Endothelial cell of umbilical vein (primary cell): ENCODE measurements at regions of chr18 and their contacts with region 1.

Region 1: GRCh38 chr18:5057386-5058348 is 139.4 kb downstream of the AKAIN1 start:
- DNase-seq: peak; percentile 50
- H3K4me3 ChIP-seq: no peak overlapping the region
- H3K27ac ChIP-seq: no peak overlapping the region
- H3K4me1 ChIP-seq: no peaks in the 10 kb centered on the region
- H3K27me3 ChIP-seq: peaks cover 0 to 1% of the 10 kb centered on the region in 2 experiments
- CTCF ChIP-seq: peak; percentile 61 to 72
- POLR2A ChIP-seq: no peak

Region 2: GRCh38 chr18:4119813-4120212 is 937.9 kb before region 1 on chr18:
- CTCF ChIA-PET with region 1: no interaction called
- POLR2A ChIA-PET with region 1: no interaction called
- dilution Hi-C with region 1: no loop called
- intact Hi-C with region 1: loop called (anchors 5 kb)
- DNase-seq: no peak
- H3K4me3 ChIP-seq: no peak overlapping the region
- H3K27ac ChIP-seq: no peak overlapping the region
- H3K4me1 ChIP-seq: no peaks in the 10 kb centered on the region
- H3K27me3 ChIP-seq: no peaks in the 10 kb centered on the region
- CTCF ChIP-seq: no peak
- POLR2A ChIP-seq: no peak